ENCODE measurements at regions of chr10 and their contacts with region 1.

Region 1: DNA sequence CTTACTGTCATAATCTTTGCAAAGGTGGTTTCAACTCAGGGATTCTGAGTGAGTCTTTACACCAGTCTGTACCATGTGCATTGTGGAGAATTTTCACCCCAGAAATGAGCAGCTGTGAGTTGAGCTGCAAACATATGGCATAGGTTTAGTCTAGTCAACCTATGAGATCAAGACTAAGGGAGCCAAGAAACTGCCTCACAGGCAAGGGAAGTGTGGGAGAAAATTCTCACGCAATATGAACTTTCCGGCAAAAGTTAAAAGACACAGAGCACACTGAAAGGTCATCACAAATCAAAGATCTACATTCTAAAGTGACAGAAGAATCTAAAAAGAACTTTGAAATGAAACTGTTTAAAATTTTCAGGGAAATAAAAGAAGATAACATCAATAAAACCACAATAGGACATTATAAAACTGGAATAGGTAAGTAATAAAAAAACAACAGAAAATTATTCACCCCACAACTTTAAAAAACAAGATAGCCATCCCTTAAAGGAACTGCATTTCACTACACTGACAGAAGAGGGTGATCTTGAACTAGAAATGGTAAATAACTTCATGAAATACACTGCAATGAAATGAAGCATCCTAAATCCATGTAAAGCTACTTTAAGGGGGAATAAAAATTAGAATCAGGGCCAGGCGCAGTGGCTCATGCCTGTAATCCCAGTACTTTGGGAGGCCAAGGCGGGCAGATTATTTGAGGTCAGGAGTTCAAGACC is 63.5 kb downstream of the LGI1 start:
- DNase-seq: no peak
- H3K4me3 ChIP-seq: no peak overlapping the region
- H3K27ac ChIP-seq: no peak overlapping the region
- H3K4me1 ChIP-seq: no peaks in the 10 kb centered on the region
- H3K27me3 ChIP-seq: no peaks in the 10 kb centered on the region
- CTCF ChIP-seq: peak; percentile 33 to 83 (median 56)
- POLR2A ChIP-seq: no peak

Region 2: DNA sequence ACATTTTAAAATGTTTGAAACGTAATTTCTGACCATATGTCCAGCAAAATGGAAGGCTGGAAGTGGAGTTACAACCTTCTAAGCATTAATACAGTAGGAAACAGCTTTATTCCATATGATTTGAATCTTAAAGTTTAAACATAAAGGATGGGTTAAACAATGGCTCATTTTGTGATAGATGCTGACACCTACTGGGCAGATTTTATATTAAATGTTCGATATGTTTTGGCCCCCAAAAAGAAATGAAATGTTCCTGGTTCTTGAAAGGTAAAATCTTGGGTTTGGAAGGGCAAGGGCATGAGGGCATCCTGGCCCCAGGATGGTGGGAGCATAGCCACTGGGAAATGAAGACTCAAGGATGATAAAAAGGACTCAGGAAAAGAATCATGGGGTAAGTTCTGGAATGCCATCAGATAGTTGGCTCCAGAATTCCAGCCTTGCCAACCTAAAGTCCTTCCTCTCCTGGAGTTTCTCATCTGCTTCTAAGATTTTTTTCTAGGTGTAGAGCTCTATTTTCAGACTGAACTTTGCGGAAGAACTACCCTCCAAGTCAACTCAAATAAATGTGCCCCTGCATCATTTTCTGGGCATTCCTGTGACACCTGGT is 37.9 kb after region 1 on chr10:
- intact Hi-C with region 1: loop called in 1 of 2 experiments (anchors 5 kb)
- DNase-seq: no peak
- H3K4me3 ChIP-seq: no peak overlapping the region
- H3K27ac ChIP-seq: no peak overlapping the region
- H3K4me1 ChIP-seq: no peaks in the 10 kb centered on the region
- H3K27me3 ChIP-seq: peaks cover 8% of the 10 kb centered on the region
- CTCF ChIP-seq: peak; percentile 36 to 63 (median 46)
- POLR2A ChIP-seq: no peak

Measured in adrenal gland (tissue), 19 donors.